ENCODE measurements at regions of chrX and their contacts with region 1.

Region 1: GRCh38 chrX:74291964-74292807 is 11.8 kb upstream of the ZCCHC13 start:
- DNase-seq: peak; percentile 92

Region 2: GRCh38 chrX:73681408-73681807 is 610.8 kb before region 1 on chrX:
- intact Hi-C with region 1: no loop called
- DNase-seq: no peak

Region 3: GRCh38 chrX:74248889-74249288 is 43.3 kb before region 1 on chrX:
- intact Hi-C with region 1: loop called (anchors 2 kb)
- DNase-seq: no peak

Region 4: DNA sequence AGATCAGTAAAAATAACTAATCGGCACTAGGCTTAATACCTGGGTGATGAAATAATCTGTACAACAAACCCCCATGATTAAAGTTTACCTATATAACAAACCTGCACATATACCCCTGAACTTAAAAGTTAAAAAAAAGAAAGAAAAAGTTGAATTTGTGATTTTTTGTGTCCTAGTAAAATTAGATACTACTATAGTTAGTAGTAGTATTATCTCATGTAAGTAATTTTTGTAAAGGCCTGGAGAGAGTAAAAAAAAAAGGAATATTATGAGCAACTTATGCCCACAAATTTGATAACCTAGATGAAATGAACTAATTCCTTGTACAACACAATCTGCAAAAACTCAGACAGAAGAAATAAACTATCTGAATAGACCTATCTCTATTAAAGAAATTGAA is 103.4 kb after region 1 on chrX:
- intact Hi-C with region 1: no loop called
- DNase-seq: no peak

Region 5: DNA sequence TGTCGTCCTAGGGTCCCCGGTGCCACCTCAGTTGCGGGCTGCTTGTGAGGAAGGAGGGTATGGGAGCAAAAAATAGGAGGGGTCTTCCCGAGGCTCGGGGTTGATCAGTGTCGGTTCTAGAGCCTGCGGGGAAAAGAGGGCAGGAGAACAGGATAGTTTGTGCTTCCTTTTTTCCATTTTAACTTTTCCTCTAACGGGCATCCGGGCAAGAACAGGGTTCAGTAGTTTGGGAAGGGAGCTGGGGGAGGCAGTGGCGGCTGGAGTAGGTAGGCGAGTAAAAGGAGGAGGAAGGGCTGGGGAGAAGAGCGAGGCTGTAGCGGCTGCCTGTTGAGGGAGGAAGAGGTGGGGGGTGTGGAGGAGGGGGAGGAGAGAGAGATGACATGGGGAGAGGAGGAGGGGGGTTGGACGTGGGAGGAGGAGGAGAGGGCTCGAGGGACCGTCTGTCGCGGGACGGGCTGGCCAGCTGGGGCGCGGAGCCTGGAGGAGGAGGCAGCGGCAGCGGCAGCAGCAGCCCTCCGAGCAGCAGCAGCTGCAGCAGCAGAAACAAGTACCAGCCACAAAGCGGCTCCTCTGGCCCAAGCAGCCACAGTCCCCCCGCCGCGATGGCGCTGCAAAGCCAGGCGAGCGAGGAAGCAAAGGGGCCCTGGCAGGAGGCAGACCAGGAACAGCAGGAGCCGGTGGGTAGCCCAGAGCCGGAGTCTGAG is 129.0 kb after region 1 on chrX and contains the start of gene SLC16A2:
- intact Hi-C with region 1: no loop called
- DNase-seq: peak; percentile 77
- total RNA-seq, gene SLC16A2: 8.2 TPM

Measured in cardiac septum (tissue), 1 donor.